MCF 10A (cell line): ENCODE measurements at regions of chr7 and their contacts with region 1.

Region 1: DNA sequence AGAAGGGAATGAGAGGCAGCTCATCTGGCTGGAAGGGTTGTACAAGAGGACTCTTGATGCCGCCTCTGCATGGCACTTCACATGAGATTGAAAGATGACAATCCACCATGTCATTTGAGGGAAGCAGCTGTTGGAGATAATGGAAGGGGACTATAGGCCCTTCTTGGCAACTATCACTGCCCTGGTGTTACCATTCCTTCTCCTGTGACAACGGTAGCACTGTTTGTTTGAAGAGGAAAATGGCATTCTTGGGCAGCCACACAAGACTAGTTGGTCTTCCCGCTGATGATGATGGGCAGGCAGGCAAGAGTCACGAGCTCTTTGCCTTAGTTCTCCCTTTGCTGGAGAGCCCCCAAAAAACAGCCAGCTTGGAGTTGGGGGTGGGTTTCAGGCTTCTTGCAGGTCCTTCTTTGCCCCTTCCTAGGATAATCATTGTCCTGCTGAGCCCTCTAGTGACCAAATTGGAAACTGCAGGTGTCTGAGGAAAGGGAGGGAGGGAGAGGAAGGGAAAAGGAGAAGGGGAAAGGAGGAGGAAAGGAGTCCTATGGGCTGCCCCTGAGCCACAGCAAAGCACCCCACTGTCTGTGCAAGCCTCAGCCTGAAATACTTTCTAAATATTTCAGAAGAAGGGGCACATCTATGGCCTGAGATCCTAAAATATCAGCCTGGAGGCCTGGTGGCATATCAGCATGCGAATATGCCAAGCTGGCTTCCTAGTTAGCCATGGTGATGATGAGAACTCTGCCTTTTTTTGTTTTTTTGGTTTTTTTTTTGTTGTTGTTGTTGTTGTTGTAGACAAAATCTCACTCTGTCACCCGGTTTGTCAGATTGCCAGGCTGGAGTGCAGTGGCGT is 165.6 kb upstream of the KMT2E start:
- DNase-seq: peak; percentile 72
- H3K4me3 Mint-ChIP-seq: no peak overlapping the region
- H3K27ac Mint-ChIP-seq: no peak overlapping the region
- H3K4me1 Mint-ChIP-seq: no peaks in the 10 kb centered on the region
- H3K27me3 Mint-ChIP-seq: peaks cover 52% of the 10 kb centered on the region
- CTCF ChIP-seq: peak; percentile 93

Region 2: DNA sequence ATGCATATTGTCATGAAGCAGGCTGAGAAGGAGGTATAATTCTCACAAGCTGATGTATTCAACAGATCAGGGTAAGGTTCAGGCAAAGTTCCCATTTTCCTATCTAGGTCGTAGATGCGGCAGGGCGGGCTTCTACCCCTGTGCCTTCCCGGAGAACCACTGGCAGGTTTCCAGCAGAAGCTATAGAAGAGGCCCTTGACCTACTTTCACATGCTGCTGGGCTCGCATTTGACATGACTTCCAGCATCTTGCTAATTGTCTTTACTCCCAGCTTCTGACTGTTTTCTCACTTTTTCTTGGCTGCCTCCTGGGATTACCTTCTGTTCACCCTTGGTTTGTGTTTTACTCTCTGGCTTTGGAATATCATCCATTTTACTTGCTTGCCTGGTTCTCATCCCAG is 608.0 kb before region 1 on chr7:
- CTCF ChIA-PET with region 1: interaction called, 16 read pairs
- POLR2A ChIA-PET with region 1: no interaction called
- intact Hi-C with region 1: no loop called
- DNase-seq: no peak
- H3K4me3 Mint-ChIP-seq: no peak overlapping the region
- H3K27ac Mint-ChIP-seq: no peak overlapping the region
- H3K4me1 Mint-ChIP-seq: no peaks in the 10 kb centered on the region
- H3K27me3 Mint-ChIP-seq: peaks cover 78% of the 10 kb centered on the region
- CTCF ChIP-seq: no peak

Region 3: GRCh38 chr7:104272767-104273384 is 575.5 kb before region 1 on chr7:
- CTCF ChIA-PET with region 1: interaction called, 40 read pairs
- POLR2A ChIA-PET with region 1: no interaction called
- intact Hi-C with region 1: no loop called
- DNase-seq: peak; percentile 50
- H3K4me3 Mint-ChIP-seq: no peak overlapping the region
- H3K27ac Mint-ChIP-seq: no peak overlapping the region
- H3K4me1 Mint-ChIP-seq: no peaks in the 10 kb centered on the region
- H3K27me3 Mint-ChIP-seq: peaks cover 50% of the 10 kb centered on the region
- CTCF ChIP-seq: peak; percentile 41

Region 4: GRCh38 chr7:104825099-104825498 is 23.3 kb before region 1 on chr7:
- CTCF ChIA-PET with region 1: interaction called, 14 read pairs
- POLR2A ChIA-PET with region 1: no interaction called
- intact Hi-C with region 1: no loop called
- DNase-seq: no peak
- H3K4me3 Mint-ChIP-seq: no peak overlapping the region
- H3K27ac Mint-ChIP-seq: no peak overlapping the region
- H3K4me1 Mint-ChIP-seq: no peaks in the 10 kb centered on the region
- H3K27me3 Mint-ChIP-seq: peaks cover 9% of the 10 kb centered on the region
- CTCF ChIP-seq: no peak

Region 5: GRCh38 chr7:104883718-104884452 is 35.5 kb after region 1 on chr7:
- CTCF ChIA-PET with region 1: interaction called, 14 read pairs
- POLR2A ChIA-PET with region 1: no interaction called
- intact Hi-C with region 1: no loop called
- DNase-seq: peak; percentile 86
- H3K4me3 Mint-ChIP-seq: no peak overlapping the region
- H3K27ac Mint-ChIP-seq: no peak overlapping the region
- H3K4me1 Mint-ChIP-seq: no peaks in the 10 kb centered on the region
- H3K27me3 Mint-ChIP-seq: peaks cover 2% of the 10 kb centered on the region
- CTCF ChIP-seq: peak; percentile 86

Region 6: DNA sequence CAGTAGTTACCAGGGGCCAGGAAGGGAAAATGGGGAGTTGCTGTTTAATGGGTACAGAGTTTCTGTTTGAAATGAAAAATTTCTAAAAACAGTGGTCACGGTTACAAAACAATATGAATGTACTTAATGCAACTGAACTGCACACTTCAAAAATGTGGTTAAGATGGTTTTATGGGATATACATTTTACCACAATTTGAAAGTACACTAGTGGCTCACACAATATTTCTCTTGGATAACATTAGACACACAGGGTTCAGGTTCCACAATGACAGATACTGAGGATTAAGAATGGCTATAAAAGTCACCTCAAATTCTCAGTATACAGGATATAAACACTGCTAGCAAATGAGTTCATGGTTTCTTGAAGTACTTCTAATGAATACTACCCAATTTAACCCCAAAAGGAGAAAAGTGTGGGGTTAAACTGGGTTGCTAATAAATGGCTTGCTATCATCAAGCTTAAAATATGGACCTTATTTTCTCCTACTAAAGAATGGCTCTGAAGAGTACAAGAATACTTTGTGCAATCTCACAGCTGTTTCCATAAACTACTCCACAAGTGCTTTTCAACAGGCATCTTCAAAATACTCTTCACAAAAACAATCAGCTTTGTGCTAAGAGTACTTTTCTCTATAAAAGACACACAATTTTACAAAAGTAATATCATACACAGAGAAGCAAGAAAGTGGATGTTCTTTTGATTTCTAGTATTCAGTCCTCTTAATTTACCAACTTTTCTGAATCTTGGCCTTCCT is 447.4 kb after region 1 on chr7:
- CTCF ChIA-PET with region 1: no interaction called
- POLR2A ChIA-PET with region 1: no interaction called
- intact Hi-C with region 1: no loop called
- DNase-seq: no peak
- H3K4me3 Mint-ChIP-seq: no peak overlapping the region
- H3K27ac Mint-ChIP-seq: peak overlapping the region; percentile 12
- H3K4me1 Mint-ChIP-seq: no peaks in the 10 kb centered on the region
- H3K27me3 Mint-ChIP-seq: no peaks in the 10 kb centered on the region
- CTCF ChIP-seq: no peak

Region 7: DNA sequence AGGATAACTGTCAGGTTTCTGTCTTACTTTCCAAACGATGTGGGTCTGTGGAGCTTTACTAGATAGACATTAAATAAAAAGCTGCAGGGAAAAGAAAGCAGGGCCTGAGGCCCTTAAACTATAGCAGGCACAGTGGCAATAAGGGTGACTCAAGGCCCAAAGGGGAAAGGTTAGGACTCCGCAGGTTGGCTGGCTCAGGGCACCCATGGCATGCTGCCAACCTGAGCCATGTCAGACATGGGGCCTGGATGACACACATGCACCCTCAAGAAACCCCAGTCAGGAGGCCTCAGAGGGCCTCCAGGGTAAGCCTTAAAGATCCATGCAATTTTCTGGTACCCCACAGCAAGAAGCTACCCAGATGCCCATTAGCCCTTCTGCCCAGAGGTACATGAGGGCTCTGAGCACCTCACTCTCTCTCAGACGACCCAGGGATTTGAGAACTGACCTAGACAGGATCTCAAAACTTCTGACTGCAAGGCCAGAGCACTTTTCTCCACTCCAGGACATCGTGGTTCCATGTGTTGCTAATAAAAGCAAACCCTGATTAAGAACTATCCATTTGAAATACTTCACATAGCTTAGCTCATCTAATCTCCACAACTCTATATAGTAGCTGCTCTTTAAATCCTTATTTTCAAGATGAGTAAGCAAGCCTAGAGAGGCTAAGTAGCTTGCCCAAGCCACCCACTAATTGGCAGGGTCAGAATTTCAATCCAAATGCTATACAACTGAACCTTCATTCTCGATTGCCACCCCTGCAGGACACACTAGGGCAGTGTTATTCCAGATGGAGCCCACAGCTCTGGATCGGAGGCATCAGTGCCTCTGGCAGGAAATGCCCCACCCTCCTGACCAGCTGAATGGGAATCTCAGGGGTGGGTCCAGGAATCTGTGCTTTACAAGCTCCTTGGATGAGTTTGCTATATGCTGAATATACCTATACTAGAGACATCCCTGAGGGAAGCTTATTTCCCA is 865.4 kb after region 1 on chr7:
- CTCF ChIA-PET with region 1: no interaction called
- POLR2A ChIA-PET with region 1: no interaction called
- intact Hi-C with region 1: no loop called
- DNase-seq: peak; percentile 39
- H3K4me3 Mint-ChIP-seq: no peak overlapping the region
- H3K27ac Mint-ChIP-seq: no peak overlapping the region
- H3K4me1 Mint-ChIP-seq: peaks cover 7% of the 10 kb centered on the region
- H3K27me3 Mint-ChIP-seq: no peaks in the 10 kb centered on the region
- CTCF ChIP-seq: no peak